ENCODE measurements at regions of chr3 and their contacts with region 1.

Region 1: GRCh38 chr3:189577009-189577950 is 53.9 kb upstream of the TP63 start:
- DNase-seq: no peak
- H3K4me3 Mint-ChIP-seq: no peak overlapping the region
- H3K27ac Mint-ChIP-seq: peak overlapping the region; percentile 5
- H3K4me1 Mint-ChIP-seq: peaks cover 10% of the 10 kb centered on the region
- H3K27me3 Mint-ChIP-seq: no peaks in the 10 kb centered on the region
- CTCF ChIP-seq: no peak

Region 2: DNA sequence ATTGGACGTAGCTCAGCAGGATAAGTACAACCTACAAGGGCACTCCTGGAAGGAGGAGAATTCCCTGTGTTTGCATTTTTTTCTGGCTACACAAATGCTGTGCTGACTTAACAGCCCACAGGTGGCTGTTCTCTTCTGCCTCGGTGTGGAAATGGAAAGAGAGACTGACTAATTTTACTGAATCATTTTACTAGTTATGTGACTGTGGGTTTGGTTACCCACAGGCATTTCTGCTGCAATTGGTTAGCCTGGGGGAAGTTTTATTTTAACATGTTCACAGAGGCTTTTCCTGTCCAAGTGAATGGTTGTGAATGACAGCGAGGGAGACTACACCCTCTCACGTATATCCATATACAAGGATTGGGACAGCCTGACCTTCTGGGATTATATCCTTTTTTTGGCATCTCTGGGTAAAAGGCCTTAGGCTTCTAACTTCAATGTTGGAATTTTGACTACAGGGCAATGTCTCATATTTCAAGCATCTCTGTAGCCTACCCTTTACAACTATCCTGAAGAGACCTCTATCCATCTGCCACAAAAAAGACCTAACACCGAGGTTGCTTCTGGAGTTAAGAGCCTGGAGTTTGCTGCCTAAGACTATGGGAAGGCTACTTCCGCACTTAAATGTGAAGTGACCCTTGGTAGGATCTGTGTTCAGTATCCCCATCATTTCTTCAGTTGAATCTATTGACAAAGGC is 13.3 kb before region 1 on chr3:
- CTCF ChIA-PET with region 1: no interaction called
- POLR2A ChIA-PET with region 1: interaction called, 13 read pairs
- intact Hi-C with region 1: no loop called
- DNase-seq: peak; percentile 92
- H3K4me3 Mint-ChIP-seq: no peak overlapping the region
- H3K27ac Mint-ChIP-seq: peak overlapping the region; percentile 69
- H3K4me1 Mint-ChIP-seq: peaks cover 26% of the 10 kb centered on the region
- H3K27me3 Mint-ChIP-seq: no peaks in the 10 kb centered on the region
- CTCF ChIP-seq: no peak